Mammary epithelial cell (primary cell): ENCODE measurements at regions of chr19 and their contacts with region 1.

Region 1: GRCh38 chr19:27720155-27720554 is 1492.8 kb downstream of the UQCRFS1 start:
- DNase-seq: no peak
- H3K4me3 ChIP-seq: no peak overlapping the region
- H3K27ac ChIP-seq: no peak overlapping the region
- H3K4me1 ChIP-seq: no peaks in the 10 kb centered on the region
- H3K27me3 ChIP-seq: no peaks in the 10 kb centered on the region
- CTCF ChIP-seq: no peak

Region 2: GRCh38 chr19:27618006-27618405 is 102.1 kb before region 1 on chr19:
- CTCF ChIA-PET with region 1: no interaction called
- dilution Hi-C with region 1: loop called (anchors 25 kb)
- in situ Hi-C with region 1: no loop called
- intact Hi-C with region 1: no loop called
- DNase-seq: no peak
- H3K4me3 ChIP-seq: no peak overlapping the region
- H3K27ac ChIP-seq: no peak overlapping the region
- H3K4me1 ChIP-seq: no peaks in the 10 kb centered on the region
- H3K27me3 ChIP-seq: no peaks in the 10 kb centered on the region
- CTCF ChIP-seq: no peak

Region 3: DNA sequence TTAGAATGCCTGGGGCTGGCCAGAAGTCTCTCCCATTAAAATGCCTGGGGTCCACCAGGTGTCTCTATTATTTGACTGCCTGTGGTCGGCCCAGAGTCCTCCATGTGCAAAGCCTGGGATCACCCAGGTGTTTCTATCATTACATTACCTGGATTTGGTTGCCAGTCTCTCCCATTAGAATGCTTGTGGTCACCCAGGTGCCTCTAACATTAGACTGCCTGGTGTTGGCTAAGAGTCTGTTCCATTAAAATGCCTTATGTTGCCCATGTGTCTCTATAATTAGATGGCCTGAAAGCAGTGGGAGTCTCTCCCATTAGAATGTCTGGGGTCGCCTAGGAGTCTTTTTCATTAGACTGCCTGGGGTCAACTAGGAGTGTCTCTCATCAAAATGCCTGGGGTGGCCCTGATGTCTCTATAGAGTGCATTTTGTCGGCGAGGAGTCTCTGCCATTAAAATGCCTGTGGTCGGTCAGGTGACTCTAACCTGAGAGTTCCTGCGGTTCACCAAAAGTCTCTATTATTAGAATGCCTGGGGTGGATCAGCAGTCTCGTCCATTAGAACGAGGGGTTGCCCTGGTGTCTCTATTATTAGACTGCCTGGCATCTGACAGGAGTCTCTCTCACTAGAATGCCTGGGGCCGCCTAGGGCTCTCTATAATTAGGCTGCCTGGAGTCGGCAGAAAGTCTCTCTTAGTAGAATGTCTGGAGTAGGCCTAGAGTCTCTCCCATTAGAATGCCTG is 47.7 kb before region 1 on chr19:
- CTCF ChIA-PET with region 1: no interaction called
- dilution Hi-C with region 1: no loop called
- in situ Hi-C with region 1: no loop called
- intact Hi-C with region 1: no loop called
- DNase-seq: no peak
- H3K4me3 ChIP-seq: no peak overlapping the region
- H3K27ac ChIP-seq: no peak overlapping the region
- H3K4me1 ChIP-seq: no peaks in the 10 kb centered on the region
- H3K27me3 ChIP-seq: no peaks in the 10 kb centered on the region
- CTCF ChIP-seq: no peak

Region 4: GRCh38 chr19:27885359-27885758 is 165.2 kb after region 1 on chr19:
- CTCF ChIA-PET with region 1: no interaction called
- dilution Hi-C with region 1: no loop called
- in situ Hi-C with region 1: no loop called
- intact Hi-C with region 1: no loop called
- DNase-seq: no peak
- H3K4me3 ChIP-seq: no peak overlapping the region
- H3K27ac ChIP-seq: no peak overlapping the region
- H3K4me1 ChIP-seq: no peaks in the 10 kb centered on the region
- H3K27me3 ChIP-seq: no peaks in the 10 kb centered on the region
- CTCF ChIP-seq: no peak